ENCODE measurements at regions of chr7 and their contacts with region 1.

Region 1: GRCh38 chr7:144738708-144739314 is 97.0 kb downstream of the TPK1 start:
- DNase-seq: no peak
- H3K4me3 ChIP-seq: no peak overlapping the region
- H3K27ac ChIP-seq: no peak overlapping the region
- H3K4me1 ChIP-seq: no peaks in the 10 kb centered on the region
- H3K27me3 ChIP-seq: no peaks in the 10 kb centered on the region
- CTCF ChIP-seq: peak in 2 of 3 experiments; percentile 36 to 63; a peak in 2 of 4 replicates
- EP300 ChIP-seq: no peak
- POLR2A ChIP-seq: no peak
- RAD21 ChIP-seq: peak; percentile 60 to 64

Region 2: DNA sequence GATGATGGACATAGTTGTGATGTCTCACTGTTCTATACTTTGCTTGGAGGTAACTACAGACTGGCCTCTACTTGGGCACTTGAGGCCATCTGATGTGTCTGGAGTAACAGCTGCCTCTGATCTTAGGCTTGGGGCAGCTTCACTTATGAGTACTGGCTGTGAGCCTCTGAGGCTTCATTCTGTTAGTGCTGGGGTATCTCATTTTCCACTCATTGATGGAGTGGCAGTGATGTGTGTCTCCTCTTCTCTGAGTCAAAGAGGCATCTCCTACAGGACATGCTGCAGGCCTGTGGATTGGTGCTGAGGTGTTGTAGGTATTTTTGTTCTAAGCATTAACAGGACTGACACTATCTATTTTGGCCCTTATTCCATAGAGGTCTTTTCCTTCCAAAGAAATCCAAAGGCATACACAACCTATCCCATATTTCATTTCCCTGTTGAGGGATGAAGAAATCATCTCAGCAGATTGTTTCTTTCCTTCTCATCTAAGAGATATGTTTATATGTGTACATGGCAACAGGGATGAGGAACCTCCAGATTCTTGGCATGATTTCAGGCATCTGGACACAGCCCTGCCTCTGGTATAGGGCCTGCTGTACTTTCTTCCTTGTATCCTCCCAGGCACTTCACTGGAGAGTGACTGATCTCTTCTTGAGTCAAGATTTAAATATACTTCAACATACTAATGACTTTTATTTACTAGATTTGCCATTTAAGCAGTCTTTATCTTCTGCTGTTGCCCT is 269.6 kb before region 1 on chr7:
- CTCF ChIA-PET with region 1: no interaction called
- POLR2A ChIA-PET with region 1: no interaction called
- DNase-seq: no peak
- H3K4me3 ChIP-seq: no peak overlapping the region
- H3K27ac ChIP-seq: no peak overlapping the region
- H3K4me1 ChIP-seq: no peaks in the 10 kb centered on the region
- H3K27me3 ChIP-seq: no peaks in the 10 kb centered on the region
- CTCF ChIP-seq: no peak
- EP300 ChIP-seq: no peak
- POLR2A ChIP-seq: no peak
- RAD21 ChIP-seq: no peak

Region 3: DNA sequence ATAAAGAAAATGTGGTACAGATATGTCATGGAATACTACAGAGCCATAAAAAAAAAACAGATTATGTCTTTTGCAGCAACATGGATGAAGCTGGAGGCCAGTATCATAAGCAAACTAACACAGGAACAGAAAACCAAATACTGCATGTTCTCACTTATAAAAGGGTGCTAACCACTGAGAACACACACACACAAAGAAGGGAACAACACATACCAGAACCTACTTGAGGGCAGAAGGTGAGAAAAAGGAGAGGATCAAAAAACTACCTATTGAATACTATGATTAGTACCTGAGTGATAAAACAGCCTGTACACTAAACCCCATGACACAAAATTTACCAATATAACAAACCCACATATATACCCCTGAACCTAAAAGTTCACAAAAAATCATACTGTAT is 47.6 kb before region 1 on chr7:
- CTCF ChIA-PET with region 1: no interaction called
- POLR2A ChIA-PET with region 1: no interaction called
- DNase-seq: no peak
- H3K4me3 ChIP-seq: no peak overlapping the region
- H3K27ac ChIP-seq: no peak overlapping the region
- H3K4me1 ChIP-seq: no peaks in the 10 kb centered on the region
- H3K27me3 ChIP-seq: no peaks in the 10 kb centered on the region
- CTCF ChIP-seq: no peak
- EP300 ChIP-seq: no peak
- POLR2A ChIP-seq: no peak
- RAD21 ChIP-seq: no peak

Region 4: GRCh38 chr7:144720710-144721109 is 18.1 kb before region 1 on chr7:
- CTCF ChIA-PET with region 1: interaction called, 12 read pairs
- POLR2A ChIA-PET with region 1: no interaction called
- DNase-seq: no peak
- H3K4me3 ChIP-seq: no peak overlapping the region
- H3K27ac ChIP-seq: no peak overlapping the region
- H3K4me1 ChIP-seq: peaks cover 0 to 4% (median 1%) of the 10 kb centered on the region in 4 experiments; a peak in 3 of 7 replicates
- H3K27me3 ChIP-seq: no peaks in the 10 kb centered on the region
- CTCF ChIP-seq: no peak
- EP300 ChIP-seq: no peak
- POLR2A ChIP-seq: no peak
- RAD21 ChIP-seq: no peak

Region 5: DNA sequence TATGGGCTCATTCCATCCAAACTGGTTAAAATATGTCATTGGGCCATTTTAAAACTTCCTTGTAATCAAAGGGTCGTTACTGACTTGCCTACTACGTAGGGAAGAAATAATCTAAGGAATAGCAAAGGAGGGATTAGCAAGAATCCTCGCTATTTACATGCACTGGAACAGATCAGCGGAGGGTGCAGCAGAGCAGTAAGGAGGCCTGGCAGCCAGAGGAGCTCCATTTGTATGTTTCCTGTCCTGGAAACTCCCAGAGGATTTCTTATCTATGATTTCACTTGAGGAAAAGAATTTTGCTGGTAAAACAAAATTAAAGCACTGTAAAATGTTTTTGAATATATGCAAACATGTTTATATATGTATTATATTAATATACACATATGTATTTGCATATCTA is 10.3 kb before region 1 on chr7:
- CTCF ChIA-PET with region 1: interaction called, 11 read pairs
- POLR2A ChIA-PET with region 1: no interaction called
- DNase-seq: no peak
- H3K4me3 ChIP-seq: no peak overlapping the region
- H3K27ac ChIP-seq: no peak overlapping the region
- H3K4me1 ChIP-seq: no peaks in the 10 kb centered on the region
- H3K27me3 ChIP-seq: no peaks in the 10 kb centered on the region
- CTCF ChIP-seq: no peak
- EP300 ChIP-seq: no peak
- POLR2A ChIP-seq: no peak
- RAD21 ChIP-seq: no peak

Region 6: DNA sequence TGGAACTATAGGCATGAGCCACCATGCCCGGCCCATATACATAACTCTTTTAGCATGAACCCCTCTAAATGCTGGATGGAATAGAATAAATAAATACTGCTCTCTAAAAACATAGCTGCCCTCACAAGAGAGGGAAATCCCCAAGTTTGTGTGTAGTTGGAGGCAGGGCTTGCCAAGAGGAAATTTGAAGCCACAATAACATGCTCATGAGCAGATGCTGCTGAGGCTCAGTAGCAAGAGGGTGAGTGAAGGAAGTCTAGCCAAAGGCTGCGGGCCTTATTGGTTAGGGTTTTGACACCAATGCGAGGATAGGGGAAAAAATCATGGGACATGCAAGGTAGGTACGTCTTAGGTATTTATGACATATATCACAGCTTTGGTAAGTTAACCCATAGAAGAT is 79.7 kb after region 1 on chr7:
- CTCF ChIA-PET with region 1: no interaction called
- POLR2A ChIA-PET with region 1: no interaction called
- DNase-seq: no peak
- H3K4me3 ChIP-seq: no peak overlapping the region
- H3K27ac ChIP-seq: no peak overlapping the region
- H3K4me1 ChIP-seq: no peaks in the 10 kb centered on the region
- H3K27me3 ChIP-seq: no peaks in the 10 kb centered on the region
- CTCF ChIP-seq: no peak
- EP300 ChIP-seq: no peak
- POLR2A ChIP-seq: no peak
- RAD21 ChIP-seq: no peak